Vagina (tissue), 2 donors: ENCODE measurements at regions of chr2 and their contacts with region 1.

Region 1: GRCh38 chr2:6764968-6765723 is 100.6 kb downstream of the CMPK2 start:
- DNase-seq: no peak
- H3K4me3 ChIP-seq: no peak overlapping the region
- H3K27ac ChIP-seq: no peak overlapping the region
- H3K4me1 ChIP-seq: no peaks in the 10 kb centered on the region
- H3K27me3 ChIP-seq: no peaks in the 10 kb centered on the region
- CTCF ChIP-seq: no peak
- POLR2A ChIP-seq: no peak

Region 2: GRCh38 chr2:5365871-5366461 is 1399.2 kb before region 1 on chr2:
- intact Hi-C with region 1: loop called (anchors 5 kb)
- DNase-seq: no peak
- H3K4me3 ChIP-seq: no peak overlapping the region
- H3K27ac ChIP-seq: no peak overlapping the region
- H3K4me1 ChIP-seq: no peaks in the 10 kb centered on the region
- H3K27me3 ChIP-seq: no peaks in the 10 kb centered on the region
- CTCF ChIP-seq: no peak
- POLR2A ChIP-seq: no peak